ENCODE measurements at regions of chr1 and their contacts with region 1.

Region 1: DNA sequence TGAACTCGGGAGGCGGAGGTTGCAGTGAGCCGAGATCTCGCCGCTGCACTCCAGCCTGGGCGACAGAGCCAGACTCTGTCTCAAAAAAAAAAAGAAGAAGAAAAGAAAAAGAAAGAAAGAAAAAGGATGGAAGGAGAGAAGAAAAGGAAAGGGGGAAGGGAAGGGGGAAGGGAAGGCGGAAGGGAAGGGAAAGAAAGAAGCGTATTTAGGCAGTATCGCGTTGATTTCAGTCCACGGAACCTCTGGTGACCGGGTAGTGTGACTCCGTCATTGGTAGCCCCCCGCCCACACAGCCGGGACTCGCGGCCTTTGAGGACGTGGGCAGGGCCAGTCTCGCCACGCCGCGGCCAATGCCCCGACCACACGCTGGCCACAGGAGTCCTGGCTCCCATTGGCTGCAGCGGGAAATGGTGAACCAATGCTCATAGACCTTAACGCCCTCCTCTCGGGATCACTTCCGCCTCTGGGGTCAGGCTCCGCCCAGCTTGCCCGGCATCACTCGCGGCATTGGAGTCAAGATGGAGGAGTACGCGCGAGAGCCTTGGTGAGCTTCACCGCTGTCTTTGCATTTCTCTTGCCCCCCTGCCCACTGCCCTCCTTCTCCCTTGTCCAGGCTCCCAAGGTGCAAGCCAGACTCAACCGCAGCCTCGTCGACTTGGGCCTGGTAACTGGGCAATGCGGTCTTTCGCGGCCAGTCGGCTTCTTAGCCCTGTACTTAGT is at the start of gene TIMM17A:
- DNase-seq: peak; percentile 100
- H3K4me3 Mint-ChIP-seq: peak within 1 kb of the TSS; percentile 96
- H3K27ac Mint-ChIP-seq: peak within 1 kb of the TSS; percentile 99
- H3K4me1 Mint-ChIP-seq: peaks cover 12% of the 10 kb centered on the region
- H3K27me3 Mint-ChIP-seq: no peaks in the 10 kb centered on the region
- CTCF ChIP-seq: no peak
- total RNA-seq, gene TIMM17A: 157 and 171 TPM in 2 replicates

Region 2: DNA sequence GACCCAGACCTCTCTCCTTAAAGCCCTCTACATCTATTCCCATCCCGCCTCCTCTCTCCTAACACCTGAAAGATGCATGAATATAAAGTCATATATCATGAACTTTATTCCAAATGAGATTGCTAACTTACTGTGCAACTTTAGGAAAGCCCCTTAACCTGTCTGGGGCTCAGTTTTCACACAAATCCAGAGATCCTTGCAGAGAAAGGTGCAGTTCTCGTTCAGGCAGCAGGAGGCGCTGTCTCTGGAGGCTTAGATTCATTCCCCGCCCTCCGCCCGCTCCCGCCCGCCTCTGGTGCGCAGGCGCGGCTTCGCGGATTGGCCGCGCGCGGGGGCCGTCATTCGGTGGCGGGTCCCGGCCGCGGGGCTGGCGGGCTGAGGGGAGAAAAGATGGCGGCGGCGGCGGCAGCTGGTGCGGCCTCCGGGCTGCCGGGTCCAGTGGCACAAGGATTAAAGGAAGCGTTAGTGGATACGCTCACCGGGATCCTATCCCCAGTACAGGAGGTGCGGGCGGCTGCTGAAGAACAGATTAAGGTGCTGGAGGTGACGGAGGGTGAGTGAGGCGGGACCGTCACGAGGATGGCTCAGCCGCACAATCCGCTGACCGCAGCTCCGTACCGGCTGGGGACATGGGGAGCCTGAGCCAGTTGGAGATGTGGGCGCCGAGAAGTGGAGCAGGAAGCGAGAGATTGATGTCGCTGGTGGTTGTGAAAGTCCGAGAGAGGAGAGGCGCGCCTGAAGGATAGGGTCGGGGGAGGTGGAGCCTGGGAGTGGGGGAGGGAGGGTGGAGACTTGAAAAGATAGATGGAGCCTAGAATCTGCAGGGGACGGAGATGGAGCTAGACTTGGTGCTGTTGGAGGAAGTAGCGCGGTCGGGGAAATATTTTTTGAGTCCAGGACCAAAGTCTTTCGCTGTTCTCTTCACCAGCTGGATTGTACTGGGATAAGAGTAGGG is 126.1 kb before region 1 on chr1 and contains the start of gene IPO9:
- CTCF ChIA-PET with region 1: no interaction called
- POLR2A ChIA-PET with region 1: interaction called, 12 read pairs
- intact Hi-C with region 1: no loop called
- DNase-seq: peak; percentile 98
- H3K4me3 Mint-ChIP-seq: peak within 1 kb of the TSS; percentile 100
- H3K27ac Mint-ChIP-seq: peak within 1 kb of the TSS; percentile 94
- H3K4me1 Mint-ChIP-seq: peaks cover 46% of the 10 kb centered on the region
- H3K27me3 Mint-ChIP-seq: no peaks in the 10 kb centered on the region
- CTCF ChIP-seq: peak; percentile 100
- total RNA-seq, gene IPO9: 112 and 117 TPM in 2 replicates

Region 3: DNA sequence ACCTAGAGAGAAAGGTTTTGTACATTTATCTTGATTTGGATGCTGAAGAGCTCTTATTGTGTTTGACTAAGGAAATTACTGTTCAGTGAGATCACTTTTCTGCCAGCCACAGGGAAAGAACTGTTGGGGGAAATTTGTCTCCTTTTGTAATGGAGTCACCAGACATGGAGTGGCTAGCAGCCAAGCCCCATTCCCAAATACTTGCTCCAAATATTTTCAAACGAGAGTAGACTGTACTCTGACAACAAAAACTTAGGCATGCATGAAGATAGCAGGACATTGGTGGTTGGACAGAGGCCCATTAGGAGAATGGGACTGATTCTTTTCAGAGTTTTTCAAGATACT is 105.1 kb before region 1 on chr1:
- CTCF ChIA-PET with region 1: no interaction called
- POLR2A ChIA-PET with region 1: interaction called, 19 read pairs
- intact Hi-C with region 1: no loop called
- DNase-seq: peak; percentile 51
- H3K4me3 Mint-ChIP-seq: no peak overlapping the region
- H3K27ac Mint-ChIP-seq: peak overlapping the region; percentile 58
- H3K4me1 Mint-ChIP-seq: peaks cover 41% of the 10 kb centered on the region
- H3K27me3 Mint-ChIP-seq: no peaks in the 10 kb centered on the region
- CTCF ChIP-seq: no peak

Region 4: GRCh38 chr1:201888282-201889089 is 66.7 kb before region 1 on chr1 and contains the start of gene SHISA4:
- CTCF ChIA-PET with region 1: interaction called, 882 read pairs
- POLR2A ChIA-PET with region 1: interaction called, 69 read pairs
- intact Hi-C with region 1: no loop called
- DNase-seq: peak; percentile 77
- H3K4me3 Mint-ChIP-seq: peak within 1 kb of the TSS; percentile 77
- H3K27ac Mint-ChIP-seq: peak within 1 kb of the TSS; percentile 21
- H3K4me1 Mint-ChIP-seq: peaks cover 21% of the 10 kb centered on the region
- H3K27me3 Mint-ChIP-seq: no peaks in the 10 kb centered on the region
- CTCF ChIP-seq: no peak
- total RNA-seq, gene SHISA4: 7.6 and 20.9 TPM in 2 replicates

Region 5: DNA sequence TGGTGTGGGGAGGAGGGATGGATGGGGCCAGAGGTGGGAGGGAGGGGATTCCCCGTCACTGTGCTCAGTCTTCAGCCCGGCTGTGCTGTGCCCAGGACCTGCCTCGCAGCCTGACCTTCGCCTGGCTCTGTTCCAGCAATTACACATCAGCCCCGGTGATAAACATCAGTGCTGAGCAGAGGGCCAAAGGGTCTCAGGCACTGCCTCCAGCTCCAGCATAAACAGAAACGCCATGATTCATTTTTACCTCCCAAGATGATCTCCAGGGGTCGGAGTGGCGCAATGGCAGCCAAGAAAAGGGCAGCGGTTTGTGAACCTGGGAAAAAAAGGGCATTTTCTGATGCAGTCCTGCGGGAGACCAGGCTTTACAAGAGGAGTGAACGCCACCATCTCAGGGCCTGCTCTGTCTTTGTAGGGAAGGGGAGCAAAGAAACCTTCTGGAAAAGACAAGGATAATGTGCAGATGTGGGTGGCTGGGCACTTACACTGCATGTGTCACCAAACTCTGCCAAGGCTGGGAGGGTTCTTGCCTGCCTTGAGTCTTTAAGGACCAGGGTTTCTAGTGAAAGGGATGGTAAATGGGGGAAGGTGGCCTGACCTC is 38.4 kb before region 1 on chr1:
- CTCF ChIA-PET with region 1: no interaction called
- POLR2A ChIA-PET with region 1: interaction called, 24 read pairs
- intact Hi-C with region 1: no loop called
- DNase-seq: peak; percentile 100
- H3K4me3 Mint-ChIP-seq: no peak overlapping the region
- H3K27ac Mint-ChIP-seq: no peak overlapping the region
- H3K4me1 Mint-ChIP-seq: peaks cover 34% of the 10 kb centered on the region
- H3K27me3 Mint-ChIP-seq: peaks cover 11% of the 10 kb centered on the region
- CTCF ChIP-seq: no peak

Region 6: DNA sequence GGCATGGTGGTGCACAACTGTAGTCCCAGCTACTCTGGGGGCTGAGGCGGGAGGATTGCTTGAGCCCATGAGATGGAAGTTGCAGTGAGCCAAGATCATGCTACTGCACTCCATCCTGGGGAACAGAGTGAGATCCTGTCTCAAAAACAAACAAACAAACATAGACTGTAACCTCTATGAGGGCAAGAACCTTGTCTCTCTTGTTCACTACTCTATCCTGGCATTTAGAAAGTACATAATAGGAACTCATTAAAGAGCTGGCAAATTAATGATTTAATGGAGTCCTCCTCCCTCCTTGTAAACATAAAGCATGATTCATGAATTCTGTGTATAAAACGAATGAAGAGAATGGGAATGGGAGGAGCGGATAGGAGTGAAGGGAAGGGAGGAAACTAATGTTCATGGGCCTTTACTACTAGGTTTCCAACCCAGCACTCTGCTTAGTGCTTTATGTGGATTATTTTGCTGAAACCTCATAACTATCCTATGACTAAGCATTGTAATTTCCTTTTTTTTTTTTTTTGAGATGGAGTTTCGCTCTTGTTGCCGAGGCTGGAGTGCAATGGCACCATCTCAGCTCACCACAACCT is 17.4 kb before region 1 on chr1:
- CTCF ChIA-PET with region 1: interaction called, 3 read pairs
- POLR2A ChIA-PET with region 1: interaction called, 10 read pairs
- intact Hi-C with region 1: no loop called
- DNase-seq: peak; percentile 53
- H3K4me3 Mint-ChIP-seq: no peak overlapping the region
- H3K27ac Mint-ChIP-seq: peak overlapping the region; percentile 43
- H3K4me1 Mint-ChIP-seq: peaks cover 12% of the 10 kb centered on the region
- H3K27me3 Mint-ChIP-seq: no peaks in the 10 kb centered on the region
- CTCF ChIP-seq: no peak